Activated CD8-positive, alpha-beta T cell treated with anti-CD3 and anti-CD28 coated beads for 36 hours (primary cell): ENCODE measurements at regions of chr19 and their contacts with region 1.

Region 1: DNA sequence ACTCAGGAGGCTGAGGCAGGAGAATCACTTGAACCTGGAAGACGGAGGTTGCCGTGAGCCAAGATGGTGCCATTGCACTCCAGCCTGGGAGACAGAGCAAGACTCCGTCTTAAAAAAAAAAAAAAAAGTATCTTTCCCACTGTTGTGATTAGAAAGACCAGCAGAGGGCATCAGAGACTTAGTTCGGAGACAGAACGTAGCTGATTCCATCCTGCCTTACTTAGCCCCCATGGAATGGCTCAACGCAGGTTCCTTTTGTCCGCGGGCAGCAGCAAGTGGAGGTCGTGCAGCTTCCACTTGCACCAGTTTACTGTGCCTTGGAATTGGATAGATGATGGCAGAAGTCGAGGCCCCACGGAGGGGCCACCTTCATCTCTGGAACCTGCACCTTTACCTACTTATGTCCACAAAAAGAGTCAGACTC is 8.1 kb downstream of the TIMM29 start:
- DNase-seq: peak; percentile 56
- ATAC-seq: peak; percentile 92
- H3K4me3 Mint-ChIP-seq: no peak overlapping the region
- H3K27ac Mint-ChIP-seq: no peak overlapping the region
- H3K4me1 Mint-ChIP-seq: peaks cover 6% of the 10 kb centered on the region
- H3K27me3 Mint-ChIP-seq: no peaks in the 10 kb centered on the region
- CTCF ChIP-seq: peak; percentile 69

Region 2: GRCh38 chr19:10812902-10813404 is 123.7 kb before region 1 on chr19:
- CTCF ChIA-PET with region 1: no interaction called
- POLR2A ChIA-PET with region 1: no interaction called
- intact Hi-C with region 1: no loop called
- DNase-seq: peak; percentile 69
- ATAC-seq: peak; percentile 81
- H3K4me3 Mint-ChIP-seq: no peak overlapping the region
- H3K27ac Mint-ChIP-seq: peak overlapping the region; percentile 77
- H3K4me1 Mint-ChIP-seq: peaks cover 26% of the 10 kb centered on the region
- H3K27me3 Mint-ChIP-seq: no peaks in the 10 kb centered on the region
- CTCF ChIP-seq: no peak

Region 3: DNA sequence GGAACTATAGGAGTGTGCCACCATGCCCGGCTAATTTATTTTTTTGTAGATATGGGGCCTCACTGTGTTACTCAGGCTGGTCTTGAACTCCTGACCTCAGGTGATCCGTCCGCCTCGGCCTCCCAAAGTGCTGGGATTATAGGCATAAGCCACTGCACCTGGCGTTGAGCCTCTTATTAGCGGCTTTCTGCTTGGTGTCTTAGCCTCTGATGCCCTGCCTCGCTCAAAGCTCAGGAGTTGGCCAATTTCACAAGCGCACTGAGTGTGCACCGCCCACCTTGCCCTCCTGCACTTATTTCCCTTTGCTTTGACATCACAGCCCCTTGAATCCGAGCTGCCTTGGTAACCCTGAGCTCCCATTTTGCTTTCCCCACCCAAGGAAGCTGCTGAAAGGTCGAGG is 18.3 kb before region 1 on chr19:
- CTCF ChIA-PET with region 1: interaction called, 10 read pairs
- POLR2A ChIA-PET with region 1: no interaction called
- intact Hi-C with region 1: no loop called
- DNase-seq: no peak
- ATAC-seq: no peak
- H3K4me3 Mint-ChIP-seq: no peak overlapping the region
- H3K27ac Mint-ChIP-seq: no peak overlapping the region
- H3K4me1 Mint-ChIP-seq: peaks cover 1% of the 10 kb centered on the region
- H3K27me3 Mint-ChIP-seq: no peaks in the 10 kb centered on the region
- CTCF ChIP-seq: no peak

Region 4: DNA sequence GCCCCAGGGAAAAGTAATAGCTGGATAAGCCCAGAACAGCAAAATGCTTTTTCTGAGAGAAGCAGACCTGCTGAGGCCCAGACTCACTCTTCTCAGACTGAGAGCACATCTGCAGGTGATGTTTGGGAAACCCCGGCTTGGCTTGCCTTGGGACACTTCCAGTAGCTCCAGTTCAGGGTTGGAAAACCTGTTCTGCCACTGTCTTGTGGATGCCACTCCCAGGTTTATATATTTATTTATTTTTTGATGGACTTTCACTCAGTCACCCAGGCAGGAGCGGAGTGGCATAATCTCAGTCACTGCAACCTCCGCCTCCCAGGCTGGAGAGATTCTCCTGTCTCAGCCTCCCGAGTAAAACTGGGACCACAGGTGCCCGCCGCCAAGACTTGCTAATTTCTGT is 16.1 kb after region 1 on chr19:
- CTCF ChIA-PET with region 1: interaction called, 25 read pairs
- POLR2A ChIA-PET with region 1: interaction called, 4 read pairs
- intact Hi-C with region 1: no loop called
- DNase-seq: no peak
- ATAC-seq: no peak
- H3K4me3 Mint-ChIP-seq: no peak overlapping the region
- H3K27ac Mint-ChIP-seq: no peak overlapping the region
- H3K4me1 Mint-ChIP-seq: peaks cover 6% of the 10 kb centered on the region
- H3K27me3 Mint-ChIP-seq: no peaks in the 10 kb centered on the region
- CTCF ChIP-seq: no peak

Region 5: GRCh38 chr19:10975374-10976130 is 38.9 kb after region 1 on chr19:
- CTCF ChIA-PET with region 1: interaction called, 14 read pairs
- POLR2A ChIA-PET with region 1: interaction called, 5 read pairs
- intact Hi-C with region 1: no loop called
- DNase-seq: no peak
- ATAC-seq: no peak
- H3K4me3 Mint-ChIP-seq: no peak overlapping the region
- H3K27ac Mint-ChIP-seq: no peak overlapping the region
- H3K4me1 Mint-ChIP-seq: peaks cover 44% of the 10 kb centered on the region
- H3K27me3 Mint-ChIP-seq: no peaks in the 10 kb centered on the region
- CTCF ChIP-seq: no peak

Region 6: GRCh38 chr19:11011668-11012067 is 75.0 kb after region 1 on chr19:
- CTCF ChIA-PET with region 1: interaction called, 12 read pairs
- POLR2A ChIA-PET with region 1: no interaction called
- intact Hi-C with region 1: loop called (anchors 10 kb)
- DNase-seq: peak; percentile 14
- ATAC-seq: no peak
- H3K4me3 Mint-ChIP-seq: no peak overlapping the region
- H3K27ac Mint-ChIP-seq: no peak overlapping the region
- H3K4me1 Mint-ChIP-seq: no peaks in the 10 kb centered on the region
- H3K27me3 Mint-ChIP-seq: no peaks in the 10 kb centered on the region
- CTCF ChIP-seq: no peak

Region 7: GRCh38 chr19:11035441-11036377 is 99.0 kb after region 1 on chr19:
- CTCF ChIA-PET with region 1: interaction called, 14 read pairs
- POLR2A ChIA-PET with region 1: no interaction called
- intact Hi-C with region 1: no loop called
- DNase-seq: peak; percentile 92
- ATAC-seq: peak; percentile 97
- H3K4me3 Mint-ChIP-seq: no peak overlapping the region
- H3K27ac Mint-ChIP-seq: peak overlapping the region; percentile 10
- H3K4me1 Mint-ChIP-seq: peaks cover 5% of the 10 kb centered on the region
- H3K27me3 Mint-ChIP-seq: no peaks in the 10 kb centered on the region
- CTCF ChIP-seq: peak; percentile 85